CD4-positive, alpha-beta T cell (primary cell): ENCODE measurements at regions of chr2 and their contacts with region 1.

Region 1: DNA sequence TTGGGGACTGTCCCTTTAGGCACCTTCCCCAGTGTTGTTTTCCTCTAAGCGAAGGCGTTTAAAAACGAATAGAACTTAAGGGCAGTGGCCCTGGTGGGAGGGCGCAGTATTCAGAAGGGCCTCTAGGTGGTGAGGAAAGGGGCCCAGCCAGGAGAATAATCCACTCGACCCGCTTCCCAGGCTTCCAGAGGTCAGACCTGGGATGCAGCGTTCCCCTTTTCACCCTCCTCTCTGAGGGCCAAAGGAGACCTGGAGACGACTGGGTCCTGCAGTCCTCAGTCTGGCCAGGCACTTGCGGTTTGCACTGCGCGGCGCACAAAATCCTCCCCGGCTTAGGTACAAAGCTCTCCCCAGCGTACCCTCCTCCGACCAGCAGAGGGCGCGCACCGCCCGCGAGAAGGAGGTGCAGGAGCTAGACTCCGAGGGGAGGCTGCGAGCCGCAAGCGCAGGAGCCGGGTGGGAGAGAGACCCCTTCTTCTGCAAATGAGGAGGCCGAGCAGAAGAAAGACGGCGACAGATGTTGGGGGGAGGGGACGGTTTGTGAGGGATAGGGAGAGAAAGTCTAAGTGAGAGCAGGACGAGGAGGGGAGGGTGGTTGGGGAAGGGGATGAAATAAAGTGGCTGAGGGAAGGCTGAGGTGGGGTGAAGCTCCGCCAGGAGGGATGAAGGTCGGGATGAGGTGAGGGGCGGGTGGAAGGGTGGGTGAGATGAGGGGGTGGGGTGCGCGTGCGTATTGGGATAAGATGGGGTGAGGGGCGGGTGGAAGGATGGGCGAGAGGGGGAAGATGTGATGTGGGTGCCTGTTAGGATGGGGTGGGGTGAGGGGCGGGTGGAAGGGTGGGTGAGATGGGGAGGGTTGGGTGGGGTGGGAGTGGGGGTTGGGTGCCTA is 4.9 kb downstream of the FEV start:
- DNase-seq: peak; percentile 71 to 90 (median 79)
- ATAC-seq: peak; percentile 88
- H3K4me3 ChIP-seq: peak overlapping the region; percentile 25
- H3K4me3 Mint-ChIP-seq: peak overlapping the region; percentile 83
- H3K27ac ChIP-seq: no peak overlapping the region
- H3K27ac Mint-ChIP-seq: no peak overlapping the region
- H3K4me1 ChIP-seq: peaks cover 51% of the 10 kb centered on the region
- H3K4me1 Mint-ChIP-seq: peaks cover 39% of the 10 kb centered on the region
- H3K27me3 ChIP-seq: peaks cover 48 to 80% of the 10 kb centered on the region in 2 experiments
- H3K27me3 Mint-ChIP-seq: peaks cover 90% of the 10 kb centered on the region
- CTCF ChIP-seq: peak; percentile 89

Region 2: GRCh38 chr2:218859556-218859987 is 120.5 kb before region 1 on chr2 and contains the start of gene WNT6:
- CTCF ChIA-PET with region 1: interaction called, 4 read pairs
- POLR2A ChIA-PET with region 1: no interaction called
- intact Hi-C with region 1: loop called in 1 of 2 experiments (anchors 5 kb)
- DNase-seq: peak in 2 of 14 experiments; percentile 24 to 36
- ATAC-seq: peak; percentile 42
- H3K4me3 ChIP-seq: peak within 1 kb of the TSS; percentile 22
- H3K4me3 Mint-ChIP-seq: peak within 1 kb of the TSS; percentile 75
- H3K27ac ChIP-seq: no peak within 1 kb of the TSS
- H3K27ac Mint-ChIP-seq: no peak within 1 kb of the TSS
- H3K4me1 ChIP-seq: peaks cover 25% of the 10 kb centered on the region
- H3K4me1 Mint-ChIP-seq: peaks cover 29% of the 10 kb centered on the region
- H3K27me3 ChIP-seq: peaks cover 58 to 81% of the 10 kb centered on the region in 2 experiments
- H3K27me3 Mint-ChIP-seq: peaks cover 93% of the 10 kb centered on the region
- CTCF ChIP-seq: no peak
- total RNA-seq, gene WNT6: not detected

Region 3: GRCh38 chr2:218876562-218877219 is 103.4 kb before region 1 on chr2:
- CTCF ChIA-PET with region 1: interaction called, 16 read pairs
- POLR2A ChIA-PET with region 1: interaction called, 3 read pairs
- intact Hi-C with region 1: loop called in 1 of 2 experiments (anchors 5 kb)
- DNase-seq: peak; percentile 54 to 87 (median 73)
- ATAC-seq: no peak
- H3K4me3 ChIP-seq: no peak overlapping the region
- H3K4me3 Mint-ChIP-seq: peak overlapping the region; percentile 8
- H3K27ac ChIP-seq: no peak overlapping the region
- H3K27ac Mint-ChIP-seq: peak overlapping the region; percentile 6
- H3K4me1 ChIP-seq: peaks cover 78% of the 10 kb centered on the region
- H3K4me1 Mint-ChIP-seq: peaks cover 54% of the 10 kb centered on the region
- H3K27me3 ChIP-seq: peaks cover 29 to 36% of the 10 kb centered on the region in 2 experiments
- H3K27me3 Mint-ChIP-seq: peaks cover 45% of the 10 kb centered on the region
- CTCF ChIP-seq: peak; percentile 98

Region 4: GRCh38 chr2:218995972-218996711 is 16.1 kb after region 1 on chr2:
- CTCF ChIA-PET with region 1: interaction called, 30 read pairs
- POLR2A ChIA-PET with region 1: interaction called, 3 read pairs
- intact Hi-C with region 1: no loop called
- DNase-seq: peak; percentile 58 to 86 (median 72)
- ATAC-seq: peak; percentile 81
- H3K4me3 ChIP-seq: peak overlapping the region; percentile 14
- H3K4me3 Mint-ChIP-seq: no peak overlapping the region
- H3K27ac ChIP-seq: no peak overlapping the region
- H3K27ac Mint-ChIP-seq: no peak overlapping the region
- H3K4me1 ChIP-seq: peaks cover 36% of the 10 kb centered on the region
- H3K4me1 Mint-ChIP-seq: peaks cover 18% of the 10 kb centered on the region
- H3K27me3 ChIP-seq: peaks cover 81 to 83% of the 10 kb centered on the region in 2 experiments
- H3K27me3 Mint-ChIP-seq: peaks cover 86% of the 10 kb centered on the region
- CTCF ChIP-seq: peak; percentile 82

Region 5: GRCh38 chr2:219155054-219155644 is 175.1 kb after region 1 on chr2:
- CTCF ChIA-PET with region 1: interaction called, 16 read pairs
- POLR2A ChIA-PET with region 1: no interaction called
- intact Hi-C with region 1: loop called in 1 of 2 experiments (anchors 5 kb)
- DNase-seq: peak in 5 of 14 experiments; percentile 18 to 84 (median 75)
- ATAC-seq: peak; percentile 21
- H3K4me3 ChIP-seq: no peak overlapping the region
- H3K4me3 Mint-ChIP-seq: no peak overlapping the region
- H3K27ac ChIP-seq: no peak overlapping the region
- H3K27ac Mint-ChIP-seq: no peak overlapping the region
- H3K4me1 ChIP-seq: peaks cover 7% of the 10 kb centered on the region
- H3K4me1 Mint-ChIP-seq: peaks cover 13% of the 10 kb centered on the region
- H3K27me3 ChIP-seq: no peaks in the 10 kb centered on the region
- H3K27me3 Mint-ChIP-seq: no peaks in the 10 kb centered on the region
- CTCF ChIP-seq: peak; percentile 78